Heart right ventricle (tissue), 16 donors: ENCODE measurements at regions of chr11 and their contacts with region 1.

Region 1: DNA sequence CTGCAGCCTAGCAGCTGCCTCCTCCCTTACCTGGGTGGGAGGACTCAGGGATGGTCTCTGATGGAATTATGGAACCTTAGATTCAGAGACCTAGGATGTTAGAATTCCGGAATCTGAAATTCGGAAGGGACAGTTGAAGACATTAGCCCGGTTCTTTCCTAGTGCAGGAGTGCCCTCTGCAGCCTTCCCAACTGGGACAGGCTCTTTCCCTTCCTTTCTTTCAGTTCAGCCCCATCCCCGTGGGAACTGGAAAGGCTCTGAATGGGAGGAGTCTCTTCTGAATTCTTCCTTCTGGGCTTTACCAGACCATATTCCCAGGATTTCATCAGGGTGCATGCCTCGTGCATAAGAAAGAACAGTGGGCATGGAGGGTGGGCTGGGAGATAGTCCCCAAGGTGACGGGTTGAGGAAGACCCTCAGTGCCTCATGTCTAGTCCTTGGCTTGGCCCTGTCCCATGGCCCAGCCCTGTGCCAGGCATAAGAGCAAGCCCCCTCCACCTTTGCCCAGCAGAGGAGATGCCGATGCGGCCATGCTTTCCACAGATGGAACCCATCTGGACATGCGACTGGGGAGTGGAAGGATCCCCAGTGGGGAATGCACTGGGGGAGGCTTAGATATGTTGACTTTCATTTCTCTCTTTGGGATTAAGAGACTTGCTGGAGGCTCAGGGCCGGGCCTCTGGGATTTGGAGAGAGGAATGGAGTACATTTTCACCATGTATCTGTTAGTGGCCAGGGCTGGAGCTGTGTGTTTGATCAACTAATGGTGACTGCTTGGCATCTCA is 14.4 kb downstream of the DNAJB13 start:
- DNase-seq: no peak
- ATAC-seq: peak in 3 of 8 donors; percentile 26 to 62 (median 45)
- H3K4me3 ChIP-seq: no peak overlapping the region
- H3K27ac ChIP-seq: no peak overlapping the region
- H3K4me1 ChIP-seq: peaks cover 0 to 15% (median 8%) of the 10 kb centered on the region in 9 donors
- H3K27me3 ChIP-seq: peaks cover 0 to 4% (median 0%) of the 10 kb centered on the region in 7 donors
- CTCF ChIP-seq: no peak

Region 2: DNA sequence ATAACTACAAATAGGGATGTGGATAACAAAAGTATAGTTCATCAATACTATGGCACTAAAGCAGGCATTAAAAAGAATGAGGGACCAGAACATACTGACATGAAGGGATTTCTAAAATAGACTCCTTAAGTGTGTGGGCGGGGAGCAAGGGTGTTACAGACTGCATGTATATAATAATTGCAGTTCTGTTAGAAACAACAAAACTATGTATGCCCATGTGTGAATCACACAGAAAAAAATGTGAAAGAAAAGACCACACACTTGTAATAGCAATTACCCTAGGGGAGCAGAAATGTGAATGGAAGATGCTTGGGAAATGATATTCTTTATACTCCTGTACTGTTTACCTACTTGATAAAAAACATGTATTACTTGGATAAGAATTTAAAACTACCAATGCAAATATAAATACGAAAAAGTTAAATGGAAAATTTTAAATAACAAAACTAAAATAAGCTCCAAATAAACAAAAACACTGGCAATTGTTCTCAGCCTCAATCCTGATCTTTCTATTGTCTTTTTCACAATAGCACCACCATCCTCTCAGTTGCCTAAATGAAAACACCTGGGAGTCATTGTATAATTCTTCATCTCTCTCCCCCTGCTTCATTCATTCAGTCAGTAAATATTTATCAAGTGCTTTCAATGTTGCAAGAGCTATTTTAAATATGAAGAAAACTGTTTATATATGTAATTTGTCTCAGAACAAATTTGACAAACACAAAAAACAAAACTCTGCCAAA is 953.0 kb before region 1 on chr11:
- intact Hi-C with region 1: no loop called
- DNase-seq: no peak
- ATAC-seq: no peak
- H3K4me3 ChIP-seq: no peak overlapping the region
- H3K27ac ChIP-seq: peak overlapping the region in 1 of 10 donors; percentile 19
- H3K4me1 ChIP-seq: peaks cover 0 to 24% (median 17%) of the 10 kb centered on the region in 9 donors
- H3K27me3 ChIP-seq: no peaks in the 10 kb centered on the region
- CTCF ChIP-seq: no peak

Region 3: DNA sequence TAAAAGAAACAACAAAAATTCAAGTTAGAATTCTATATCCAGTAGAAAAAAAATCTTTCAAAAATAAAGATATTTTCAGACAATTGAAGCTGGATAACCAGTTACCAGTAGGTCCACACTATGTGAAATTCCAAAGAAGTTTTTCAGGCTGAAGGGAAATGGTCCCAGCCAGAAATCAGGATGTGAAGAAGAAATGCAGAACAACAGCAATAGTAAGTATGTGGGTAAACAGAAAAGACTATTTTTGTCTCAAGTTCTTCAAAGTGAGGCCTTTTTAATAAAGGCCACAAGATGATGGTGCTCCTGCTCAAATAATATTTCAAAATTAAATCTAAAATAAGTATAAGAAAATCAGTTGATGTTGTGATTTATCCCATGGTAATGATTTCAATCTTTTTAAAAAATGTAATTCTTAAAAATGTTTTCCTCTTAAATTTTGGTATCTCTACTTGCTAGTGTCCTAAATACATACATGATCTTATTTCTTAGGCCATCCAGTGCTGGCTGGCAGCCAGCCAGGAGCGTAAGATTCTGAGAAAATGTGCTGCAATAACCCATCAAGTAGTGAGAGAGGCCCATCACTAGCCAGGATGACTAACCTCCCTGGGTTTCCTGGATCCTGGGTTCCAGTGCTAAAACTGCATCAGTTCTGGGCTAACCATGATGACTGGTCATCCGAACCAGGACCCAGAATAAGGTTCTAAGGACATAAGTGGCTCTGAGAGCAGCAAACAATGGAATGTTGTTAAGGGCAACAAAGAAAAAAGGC is 59.2 kb after region 1 on chr11:
- intact Hi-C with region 1: loop called in 2 of 10 experiments (anchors 10 kb)
- DNase-seq: peak in 1 of 2 donors; percentile 60
- ATAC-seq: peak in 1 of 8 donors; percentile 54
- H3K4me3 ChIP-seq: no peak overlapping the region
- H3K27ac ChIP-seq: peak overlapping the region in 2 of 10 donors; percentile 29 to 92
- H3K4me1 ChIP-seq: peaks cover under 1 to 72% (median 14%) of the 10 kb centered on the region in 9 donors
- H3K27me3 ChIP-seq: no peaks in the 10 kb centered on the region
- CTCF ChIP-seq: no peak

Region 4: DNA sequence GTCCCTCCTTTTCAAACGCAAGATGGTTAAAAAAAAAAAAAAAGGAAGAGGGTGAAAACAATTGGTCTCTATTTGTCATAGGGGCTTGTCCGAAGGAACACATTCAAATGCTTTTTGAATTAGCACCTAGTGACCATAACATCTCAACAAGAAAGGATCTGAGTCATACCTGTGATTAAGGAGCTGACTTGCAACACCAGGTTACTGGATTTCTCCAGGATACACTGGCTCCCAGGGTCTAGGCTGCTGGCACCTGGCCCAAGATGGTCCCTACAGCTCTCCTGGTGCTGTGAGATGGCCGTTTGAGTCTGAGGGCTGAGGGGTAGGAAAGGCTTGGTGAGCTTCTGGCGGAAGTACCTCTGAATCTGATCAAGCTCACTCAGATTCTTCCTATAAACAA is 72.0 kb after region 1 on chr11:
- intact Hi-C with region 1: loop called in 2 of 10 experiments (anchors 5 to 10 kb)
- DNase-seq: no peak
- ATAC-seq: no peak
- H3K4me3 ChIP-seq: no peak overlapping the region
- H3K27ac ChIP-seq: no peak overlapping the region
- H3K4me1 ChIP-seq: no peaks in the 10 kb centered on the region
- H3K27me3 ChIP-seq: no peaks in the 10 kb centered on the region
- CTCF ChIP-seq: no peak

Region 5: GRCh38 chr11:74069147-74070047 is 104.1 kb after region 1 on chr11:
- intact Hi-C with region 1: loop called in 1 of 10 experiments (anchors 10 kb)
- DNase-seq: no peak
- ATAC-seq: no peak
- H3K4me3 ChIP-seq: no peak overlapping the region
- H3K27ac ChIP-seq: no peak overlapping the region
- H3K4me1 ChIP-seq: no peaks in the 10 kb centered on the region
- H3K27me3 ChIP-seq: no peaks in the 10 kb centered on the region
- CTCF ChIP-seq: no peak

Region 6: GRCh38 chr11:74090701-74091100 is 125.4 kb after region 1 on chr11:
- intact Hi-C with region 1: loop called in 4 of 10 experiments (anchors 10 kb)
- DNase-seq: no peak
- ATAC-seq: no peak
- H3K4me3 ChIP-seq: no peak overlapping the region
- H3K27ac ChIP-seq: no peak overlapping the region
- H3K4me1 ChIP-seq: no peaks in the 10 kb centered on the region
- H3K27me3 ChIP-seq: no peaks in the 10 kb centered on the region
- CTCF ChIP-seq: peak in 2 of 9 donors; percentile 12 to 23

Region 7: DNA sequence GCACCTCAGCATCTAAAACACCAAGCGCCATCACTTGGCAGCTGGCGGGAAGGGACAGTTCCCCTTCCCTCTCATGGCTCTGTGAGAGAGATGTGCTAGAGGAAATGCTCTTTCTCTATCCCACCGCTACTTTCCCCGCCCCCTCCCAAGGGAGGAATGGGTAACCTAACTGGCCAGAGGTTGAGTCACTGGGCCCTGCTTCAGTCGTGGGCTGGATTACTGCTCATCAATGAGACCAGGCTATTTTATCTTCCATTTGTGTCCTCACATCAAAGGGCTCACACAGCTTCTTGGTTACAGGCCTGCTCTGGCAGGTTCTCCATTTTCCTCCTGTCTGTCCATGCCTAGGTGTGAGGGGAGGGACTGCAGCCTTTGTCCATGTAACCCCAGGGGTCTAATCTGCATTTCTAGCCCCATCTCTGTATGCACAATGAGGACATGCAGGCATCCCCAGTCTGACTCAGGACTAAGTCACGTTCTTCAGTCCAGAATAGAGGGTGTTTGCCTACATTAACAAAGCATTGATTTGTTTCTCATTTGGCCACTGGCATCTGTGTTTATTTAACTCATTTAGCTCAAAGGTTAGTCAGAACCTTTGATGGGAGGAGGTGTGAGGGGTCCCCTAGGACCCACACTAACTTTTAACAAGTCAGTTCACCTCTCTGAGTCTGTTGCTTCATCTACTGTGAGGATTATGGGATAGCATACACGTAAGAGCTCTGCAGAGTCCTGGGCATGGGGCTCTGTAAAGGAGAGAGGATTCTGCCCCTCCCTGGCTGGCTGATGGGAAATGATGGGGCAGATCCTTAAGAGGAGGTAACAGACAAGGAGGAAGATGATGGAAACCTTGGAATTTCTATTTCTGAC is 884.5 kb after region 1 on chr11:
- intact Hi-C with region 1: no loop called
- DNase-seq: peak in 1 of 2 donors; percentile 15
- ATAC-seq: peak in 2 of 8 donors; percentile 23 to 35
- H3K4me3 ChIP-seq: no peak overlapping the region
- H3K27ac ChIP-seq: peak overlapping the region in 1 of 10 donors; percentile 5
- H3K4me1 ChIP-seq: peaks cover 0 to 10% (median 0%) of the 10 kb centered on the region in 9 donors
- H3K27me3 ChIP-seq: no peaks in the 10 kb centered on the region
- CTCF ChIP-seq: no peak